K562 (cell line): ENCODE measurements at regions of chr4 and their contacts with region 1.

Region 1: GRCh38 chr4:10096201-10096977 is 20.2 kb downstream of the WDR1 start:
- DNase-seq: peak; percentile 60 to 78 (median 70)
- ATAC-seq: peak; percentile 62
- H3K4me3 ChIP-seq: no peak overlapping the region
- H3K27ac ChIP-seq: peak overlapping the region; percentile 73; the same call in 2 of the 3 replicates
- H3K4me1 ChIP-seq: peaks cover 12 to 28% of the 10 kb centered on the region in 2 experiments; a peak in 4 of 5 replicates
- H3K27me3 ChIP-seq: no peaks in the 10 kb centered on the region
- CTCF ChIP-seq: no peak
- EP300 ChIP-seq: no peak
- POLR2A ChIP-seq: no peak; the same call in 1 of the 2 replicates
- RAD21 ChIP-seq: no peak

Region 2: DNA sequence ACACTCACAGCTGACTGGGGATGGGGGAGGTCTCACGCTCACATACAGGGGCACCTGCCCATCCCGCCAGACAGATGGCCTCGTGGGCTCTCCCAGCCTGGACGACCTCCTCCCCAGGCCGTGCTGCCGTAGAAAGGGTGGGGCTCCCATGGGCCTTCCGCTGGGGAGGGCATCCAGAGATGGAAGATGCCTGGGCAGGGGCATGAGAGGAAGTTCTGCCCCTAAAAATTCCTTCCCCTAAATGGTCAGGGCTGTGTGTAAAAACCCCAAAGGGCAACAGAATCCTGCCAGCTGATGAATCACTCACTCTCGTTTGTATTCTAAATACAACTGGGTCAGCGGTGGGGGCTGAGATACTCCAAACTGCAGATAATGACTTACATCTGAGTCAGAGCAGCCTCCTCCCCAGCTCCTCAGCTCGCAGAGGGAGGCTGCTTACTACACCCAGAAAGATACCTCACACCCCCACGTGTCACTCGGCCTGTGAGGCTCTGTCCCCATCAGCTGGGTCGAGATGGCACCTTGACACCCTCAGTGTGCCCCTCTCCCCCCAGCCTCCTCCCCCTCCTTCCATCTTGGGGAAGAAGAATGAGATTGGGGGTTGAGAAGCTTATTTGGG is 10.1 kb after region 1 on chr4:
- CTCF ChIA-PET with region 1: no interaction called
- POLR2A ChIA-PET with region 1: interaction called, 64 read pairs
- in situ Hi-C with region 1: no loop called
- intact Hi-C with region 1: no loop called
- DNase-seq: peak in 3 of 4 experiments; percentile 49 to 87 (median 84)
- ATAC-seq: peak; percentile 81
- H3K4me3 ChIP-seq: no peak overlapping the region
- H3K27ac ChIP-seq: peak overlapping the region; percentile 68; the same call in 2 of the 3 replicates
- H3K4me1 ChIP-seq: peaks cover 28 to 30% of the 10 kb centered on the region in 2 experiments
- H3K27me3 ChIP-seq: no peaks in the 10 kb centered on the region
- CTCF ChIP-seq: no peak
- EP300 ChIP-seq: no peak
- POLR2A ChIP-seq: no peak
- RAD21 ChIP-seq: no peak

Region 3: DNA sequence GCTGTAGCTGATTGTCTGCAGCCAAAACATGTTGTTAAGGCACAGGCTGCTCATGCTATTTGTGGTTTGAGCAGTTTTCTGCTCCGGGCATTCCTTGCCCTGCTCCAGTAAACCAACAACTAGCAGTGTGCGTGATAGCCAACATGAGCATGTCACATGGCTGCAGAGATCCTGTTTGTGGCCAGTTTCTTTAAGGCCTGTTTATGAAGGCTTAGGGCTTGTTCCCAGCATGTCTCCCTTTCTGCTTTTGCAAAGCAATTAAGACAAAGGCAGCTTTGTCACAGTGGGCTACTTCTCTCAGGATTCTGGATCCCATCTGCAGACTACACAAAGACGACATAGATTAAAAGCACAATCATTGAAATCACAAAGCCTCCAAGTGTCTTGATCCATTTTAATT is 200.3 kb after region 1 on chr4:
- CTCF ChIA-PET with region 1: no interaction called
- POLR2A ChIA-PET with region 1: no interaction called
- in situ Hi-C with region 1: no loop called
- intact Hi-C with region 1: no loop called
- DNase-seq: no peak
- ATAC-seq: no peak; the same call in 2 of the 3 replicates
- H3K4me3 ChIP-seq: no peak overlapping the region
- H3K27ac ChIP-seq: no peak overlapping the region
- H3K4me1 ChIP-seq: 0 out of 5 replicates have a peak, but pooled peaks cover 0 to 6% of the 10 kb centered on the region in 2 experiments
- H3K27me3 ChIP-seq: no peaks in the 10 kb centered on the region
- CTCF ChIP-seq: no peak
- EP300 ChIP-seq: no peak
- POLR2A ChIP-seq: no peak
- RAD21 ChIP-seq: no peak